Posterior vena cava (tissue), 2 donors: ENCODE measurements at regions of chr19 and their contacts with region 1.

Region 1: GRCh38 chr19:44615863-44616247 is 2.5 kb downstream of the IGSF23 start:
- DNase-seq: no peak

Region 2: GRCh38 chr19:44582581-44583265 is 33.1 kb before region 1 on chr19:
- intact Hi-C with region 1: loop called in 1 of 2 experiments (anchors 1 kb)
- DNase-seq: no peak